Activated CD8-positive, alpha-beta memory T cell treated with anti-CD3 and anti-CD28 coated beads, Interleukin-2, amount 10 ng/mL, durations not matched to agents 7 days and 5 days (primary cell): ENCODE measurements at regions of chr5 and their contacts with region 1.

Region 1: DNA sequence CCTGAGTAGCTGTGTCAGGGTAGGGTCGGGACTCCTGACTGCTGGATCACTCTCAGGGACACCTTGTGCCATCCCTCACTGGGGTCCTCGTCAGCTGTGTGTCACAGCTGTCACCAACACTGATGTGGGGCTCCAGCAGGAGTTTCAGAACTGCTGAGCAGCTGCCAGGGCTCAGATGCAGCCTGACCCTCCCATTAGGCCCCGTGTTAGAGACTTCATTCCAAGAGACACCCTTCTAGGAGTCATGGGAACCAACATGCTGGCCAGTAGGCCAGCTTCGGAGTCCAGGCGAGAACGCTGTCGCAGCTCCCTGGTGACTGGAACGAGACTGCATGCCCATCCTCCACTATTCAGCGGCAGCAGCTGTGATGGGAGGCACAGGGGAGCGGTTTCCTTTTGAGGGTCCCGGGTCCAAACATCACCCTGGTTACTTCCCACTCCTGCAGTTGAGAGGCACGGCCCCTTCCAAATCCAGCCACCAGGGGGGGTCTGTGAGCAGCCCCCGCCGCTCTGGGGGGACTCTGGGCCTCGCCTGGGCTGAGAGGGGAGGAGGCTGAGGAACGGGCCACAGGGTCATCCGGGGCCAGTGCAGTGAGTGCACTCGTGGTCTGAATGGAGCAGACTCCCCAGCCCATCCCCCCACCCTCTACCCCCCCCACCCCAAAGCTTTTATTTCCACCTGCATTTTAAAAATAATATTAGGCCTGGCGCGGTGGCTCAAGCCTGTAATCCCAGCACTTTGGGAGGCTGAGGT is 12.6 kb upstream of the TCF7 start:
- DNase-seq: peak; percentile 73
- ATAC-seq: peak; percentile 69
- H3K4me3 Mint-ChIP-seq: no peak overlapping the region
- H3K27ac Mint-ChIP-seq: no peak overlapping the region
- H3K4me1 Mint-ChIP-seq: peaks cover 36% of the 10 kb centered on the region
- H3K27me3 Mint-ChIP-seq: peaks cover 73% of the 10 kb centered on the region

Region 2: GRCh38 chr5:133924221-133924920 is 177.5 kb before region 1 on chr5:
- CTCF ChIA-PET with region 1: no interaction called
- DNase-seq: no peak
- ATAC-seq: no peak
- H3K4me3 Mint-ChIP-seq: no peak overlapping the region
- H3K27ac Mint-ChIP-seq: no peak overlapping the region
- H3K4me1 Mint-ChIP-seq: peaks cover 4% of the 10 kb centered on the region
- H3K27me3 Mint-ChIP-seq: peaks cover 17% of the 10 kb centered on the region

Region 3: DNA sequence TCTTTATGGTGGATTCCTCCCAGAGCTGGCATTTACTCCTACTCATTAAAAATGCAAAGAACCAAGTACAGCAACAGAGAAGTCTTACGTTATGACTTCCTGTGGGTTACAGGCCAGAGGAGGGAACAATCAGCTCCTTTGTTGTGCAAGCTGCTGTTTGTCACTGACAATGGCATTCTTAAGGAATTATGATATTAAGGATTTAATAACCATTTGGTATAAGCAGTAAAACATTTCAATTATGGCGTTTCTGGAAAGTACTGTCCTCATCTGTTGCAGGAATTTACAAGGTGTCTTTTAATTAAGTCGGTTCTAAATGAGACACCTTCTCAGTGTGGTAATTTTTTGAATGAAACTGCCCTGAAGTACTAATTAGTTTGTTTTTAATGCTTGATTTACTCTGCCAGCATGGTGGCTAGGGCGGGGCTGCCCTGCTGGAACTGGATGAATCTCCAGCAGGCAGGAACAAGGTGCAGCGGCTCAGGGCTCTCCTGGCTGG is 48.0 kb before region 1 on chr5:
- CTCF ChIA-PET with region 1: no interaction called
- DNase-seq: no peak
- ATAC-seq: no peak
- H3K4me3 Mint-ChIP-seq: no peak overlapping the region
- H3K27ac Mint-ChIP-seq: no peak overlapping the region
- H3K4me1 Mint-ChIP-seq: peaks cover 12% of the 10 kb centered on the region
- H3K27me3 Mint-ChIP-seq: peaks cover 14% of the 10 kb centered on the region

Region 4: GRCh38 chr5:134113902-134114875 is 12.3 kb after region 1 on chr5 and contains the start of gene TCF7:
- CTCF ChIA-PET with region 1: interaction called, 47 read pairs
- DNase-seq: peak; percentile 63
- ATAC-seq: peak; percentile 85
- H3K4me3 Mint-ChIP-seq: peak within 1 kb of the TSS; percentile 68
- H3K27ac Mint-ChIP-seq: peak within 1 kb of the TSS; percentile 35
- H3K4me1 Mint-ChIP-seq: peaks cover 30% of the 10 kb centered on the region
- H3K27me3 Mint-ChIP-seq: peaks cover 84% of the 10 kb centered on the region
- total RNA-seq, gene TCF7: 7.0 to 7.9 TPM

Region 5: DNA sequence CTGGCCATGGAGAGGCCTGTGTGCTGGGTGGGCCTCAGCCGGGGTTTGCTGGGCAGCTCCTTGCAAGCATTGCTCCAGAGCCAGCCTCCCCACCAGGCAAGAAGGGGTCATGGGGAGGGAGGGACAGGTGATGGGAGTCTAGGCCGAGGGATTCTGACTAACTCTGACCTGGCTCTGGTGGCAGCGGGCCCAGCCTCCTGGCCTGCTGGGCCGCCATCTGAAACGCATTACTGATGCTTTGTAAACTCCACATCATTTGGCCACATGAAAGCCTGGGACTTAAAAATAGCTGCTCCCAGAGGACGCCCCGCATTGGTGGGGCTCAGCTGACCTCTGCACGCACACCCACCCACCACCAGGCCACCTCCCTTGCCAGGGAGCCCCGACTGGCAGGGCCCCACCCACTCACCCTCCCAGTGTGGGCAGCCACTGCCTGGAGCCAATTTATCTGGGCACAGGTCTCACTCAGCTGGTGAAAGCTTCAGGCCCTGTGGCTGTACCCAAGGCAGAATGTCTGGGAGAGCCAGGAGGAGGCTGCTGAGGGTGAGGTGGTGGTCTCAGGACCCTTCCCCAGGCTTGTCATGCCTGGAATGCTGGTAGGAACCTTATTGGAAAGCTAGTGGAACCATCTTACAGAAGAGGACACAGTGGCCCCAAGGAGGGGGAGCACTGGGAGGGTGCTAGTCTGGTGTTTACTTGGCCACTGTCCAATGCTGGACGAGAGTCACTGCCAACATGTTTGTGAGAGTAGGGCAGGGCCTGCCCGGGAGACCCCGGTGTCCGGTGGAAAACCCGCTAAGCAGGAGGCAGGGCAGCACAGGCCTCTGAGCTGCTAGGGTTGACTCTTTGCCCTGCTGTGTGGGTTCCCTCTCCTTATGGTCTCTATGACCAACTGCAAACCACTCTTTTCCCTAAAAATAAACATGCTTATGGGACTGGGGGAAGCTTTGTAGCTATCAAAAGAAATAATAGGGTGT is 23.5 kb after region 1 on chr5:
- CTCF ChIA-PET with region 1: interaction called, 11 read pairs
- DNase-seq: no peak
- ATAC-seq: no peak
- H3K4me3 Mint-ChIP-seq: no peak overlapping the region
- H3K27ac Mint-ChIP-seq: no peak overlapping the region
- H3K4me1 Mint-ChIP-seq: peaks cover 46% of the 10 kb centered on the region
- H3K27me3 Mint-ChIP-seq: peaks cover 72% of the 10 kb centered on the region

Region 6: GRCh38 chr5:134132372-134133034 is 30.6 kb after region 1 on chr5:
- CTCF ChIA-PET with region 1: interaction called, 114 read pairs
- DNase-seq: peak; percentile 83
- ATAC-seq: peak; percentile 64
- H3K4me3 Mint-ChIP-seq: no peak overlapping the region
- H3K27ac Mint-ChIP-seq: peak overlapping the region; percentile 30
- H3K4me1 Mint-ChIP-seq: peaks cover 62% of the 10 kb centered on the region
- H3K27me3 Mint-ChIP-seq: peaks cover 58% of the 10 kb centered on the region

Region 7: DNA sequence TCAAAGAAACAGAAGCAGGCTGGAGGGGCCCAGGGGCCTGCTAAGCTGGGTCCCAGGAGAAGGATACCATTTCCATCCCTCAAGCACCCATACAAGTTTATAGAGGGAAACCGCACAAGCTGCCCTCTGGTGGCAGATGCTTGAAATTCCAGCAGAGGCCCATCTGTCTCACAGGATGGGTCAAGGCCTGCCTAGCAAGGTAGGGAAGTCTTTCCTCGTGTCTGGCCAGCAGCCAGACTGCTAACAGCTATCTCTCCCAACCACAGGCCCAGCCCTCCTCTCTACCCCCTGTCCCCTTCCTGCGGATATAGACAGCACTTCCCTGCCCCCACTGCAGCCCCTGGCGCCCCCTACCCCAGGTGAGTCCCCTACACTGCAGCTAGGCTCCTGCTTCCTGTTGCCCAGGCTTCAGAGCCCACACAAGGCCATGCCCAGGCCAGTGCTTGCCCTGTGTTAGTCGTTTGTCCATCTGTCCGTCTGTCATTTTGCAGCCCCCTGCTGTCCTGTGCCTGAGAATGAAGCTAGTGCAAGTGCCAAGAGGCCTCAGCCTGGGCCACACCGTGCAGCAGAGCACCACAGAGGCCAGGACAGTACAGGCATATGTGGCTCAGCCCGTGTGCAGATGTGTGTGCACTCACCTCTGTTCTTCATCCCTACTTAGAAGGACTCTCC is 38.8 kb after region 1 on chr5:
- CTCF ChIA-PET with region 1: interaction called, 114 read pairs
- DNase-seq: peak; percentile 75
- ATAC-seq: peak; percentile 53
- H3K4me3 Mint-ChIP-seq: no peak overlapping the region
- H3K27ac Mint-ChIP-seq: no peak overlapping the region
- H3K4me1 Mint-ChIP-seq: peaks cover 32% of the 10 kb centered on the region
- H3K27me3 Mint-ChIP-seq: peaks cover 8% of the 10 kb centered on the region

Region 8: DNA sequence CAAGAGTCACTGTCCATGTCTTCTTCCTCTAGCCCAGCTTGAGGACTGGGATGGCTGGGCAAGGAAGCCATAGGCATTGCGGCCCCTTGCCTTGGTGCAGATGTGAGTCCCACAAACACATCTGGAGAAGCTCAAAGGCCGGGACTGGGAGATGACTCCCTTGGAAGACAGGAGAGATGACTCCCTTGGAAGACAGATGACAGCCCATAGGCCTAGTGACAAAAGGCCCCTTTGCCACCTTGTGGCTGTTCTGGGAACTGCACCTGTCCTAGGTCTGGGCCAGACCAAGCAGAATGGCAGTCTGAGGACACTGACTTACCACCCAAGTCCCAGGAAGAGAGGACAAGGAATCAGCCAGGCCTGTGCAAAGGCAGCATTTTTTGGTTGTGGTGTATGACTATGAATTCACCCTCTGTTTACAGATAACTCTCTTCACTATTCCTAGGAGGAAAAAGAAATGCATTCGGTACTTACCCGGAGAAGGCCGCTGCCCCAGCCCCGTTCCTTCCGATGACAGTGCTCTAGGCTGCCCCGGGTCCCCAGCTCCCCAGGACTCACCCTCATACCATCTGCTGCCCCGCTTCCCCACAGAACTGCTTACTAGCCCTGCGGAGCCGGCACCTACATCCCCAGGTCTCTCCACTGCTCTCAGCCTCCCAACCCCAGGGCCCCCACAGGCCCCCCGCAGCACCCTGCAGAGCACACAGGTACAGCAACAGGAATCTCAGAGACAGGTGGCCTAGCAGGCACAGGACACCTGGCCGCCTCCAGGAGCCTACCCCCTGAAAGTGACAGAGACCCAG is 44.1 kb after region 1 on chr5:
- CTCF ChIA-PET with region 1: interaction called, 114 read pairs
- DNase-seq: peak; percentile 84
- ATAC-seq: peak; percentile 84
- H3K4me3 Mint-ChIP-seq: no peak overlapping the region
- H3K27ac Mint-ChIP-seq: no peak overlapping the region
- H3K4me1 Mint-ChIP-seq: peaks cover 7% of the 10 kb centered on the region
- H3K27me3 Mint-ChIP-seq: no peaks in the 10 kb centered on the region

Region 9: GRCh38 chr5:134255418-134256175 is 153.7 kb after region 1 on chr5:
- CTCF ChIA-PET with region 1: no interaction called
- DNase-seq: no peak
- ATAC-seq: no peak
- H3K4me3 Mint-ChIP-seq: no peak overlapping the region
- H3K27ac Mint-ChIP-seq: no peak overlapping the region
- H3K4me1 Mint-ChIP-seq: no peaks in the 10 kb centered on the region
- H3K27me3 Mint-ChIP-seq: peaks cover 8% of the 10 kb centered on the region